ENCODE measurements at regions of chr2 and their contacts with region 1.

Region 1: DNA sequence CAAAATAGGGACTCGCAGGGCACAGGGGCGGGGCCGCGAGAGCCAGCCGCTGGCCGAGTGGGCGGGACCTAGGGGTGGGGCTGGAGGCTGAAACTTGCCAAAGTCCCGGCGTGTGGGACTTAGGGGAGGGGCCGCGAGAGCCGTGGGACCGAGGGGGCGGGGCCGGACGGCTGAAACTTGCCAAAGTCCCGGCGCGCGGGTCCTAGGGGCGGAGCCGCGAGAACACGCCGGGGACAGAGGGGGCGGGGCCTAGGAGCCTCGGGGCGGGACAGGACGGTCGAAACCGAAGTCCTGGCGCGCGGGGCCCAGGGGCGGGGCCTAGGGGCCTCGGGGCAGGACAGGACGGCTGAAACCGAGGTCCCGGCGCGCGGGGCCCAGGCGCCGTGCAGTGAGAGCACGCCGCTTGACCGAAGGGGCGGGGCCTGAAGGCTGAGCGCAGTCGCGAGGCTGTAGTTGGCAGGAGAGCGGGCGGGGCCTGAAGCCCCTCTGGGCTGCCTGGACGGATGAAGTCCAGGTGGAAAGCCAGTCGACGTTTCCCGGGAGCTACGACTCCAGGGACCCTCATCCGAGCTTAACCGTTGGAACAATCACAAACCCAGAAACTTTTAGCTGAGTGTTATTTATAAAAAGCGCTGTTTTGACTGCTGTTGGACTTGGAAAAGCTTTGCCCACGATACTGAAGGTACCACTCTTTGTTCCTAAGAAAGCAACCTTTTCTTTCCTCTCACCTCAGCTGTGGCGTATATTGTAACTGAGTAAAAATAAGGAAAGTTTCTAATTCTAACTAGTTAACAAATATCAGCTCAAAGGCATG is 475 bp upstream of the BARD1 start:
- DNase-seq: peak; percentile 98 to 99
- ATAC-seq: peak; percentile 87 to 88
- H3K4me3 ChIP-seq: peak overlapping the region; percentile 84 to 96 (median 88)
- H3K27ac ChIP-seq: peak overlapping the region; percentile 92 to 96 (median 94)
- H3K4me1 ChIP-seq: peaks cover 19 to 34% of the 10 kb centered on the region in 2 donors
- H3K27me3 ChIP-seq: no peaks in the 10 kb centered on the region
- CTCF ChIP-seq: no peak
- POLR2A ChIP-seq: no peak

Region 2: DNA sequence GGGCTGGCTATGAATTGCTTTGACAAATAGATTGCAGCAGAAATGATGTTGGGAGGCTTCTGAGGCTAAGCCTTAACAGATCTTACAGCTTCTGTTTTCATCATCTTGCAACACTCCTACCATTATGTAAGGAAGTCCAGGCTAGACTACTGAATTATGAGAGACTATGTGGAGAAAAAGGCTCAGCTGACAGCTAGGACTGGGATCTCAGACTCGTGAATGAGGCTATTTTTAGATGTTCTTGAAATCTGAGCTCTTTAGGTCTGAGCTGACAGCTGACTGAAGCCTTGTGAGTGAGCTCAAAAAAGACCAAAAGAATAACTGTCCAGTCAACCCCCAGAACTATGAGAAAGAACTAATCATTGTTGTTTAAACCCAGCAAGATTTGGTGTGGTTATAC is 328.8 kb before region 1 on chr2:
- in situ Hi-C with region 1: no loop called
- intact Hi-C with region 1: loop called (anchors 2 kb)
- DNase-seq: peak; percentile 42 to 62
- ATAC-seq: peak; percentile 97
- H3K4me3 ChIP-seq: no peak overlapping the region
- H3K27ac ChIP-seq: peak overlapping the region; percentile 78 to 87 (median 84)
- H3K4me1 ChIP-seq: peaks cover 10 to 46% of the 10 kb centered on the region in 2 donors
- H3K27me3 ChIP-seq: no peaks in the 10 kb centered on the region
- CTCF ChIP-seq: no peak
- POLR2A ChIP-seq: peak in 1 of 2 donors; percentile 42

Region 3: GRCh38 chr2:214604861-214605260 is 205.1 kb before region 1 on chr2:
- in situ Hi-C with region 1: no loop called
- intact Hi-C with region 1: no loop called
- DNase-seq: no peak
- ATAC-seq: no peak
- H3K4me3 ChIP-seq: no peak overlapping the region
- H3K27ac ChIP-seq: no peak overlapping the region
- H3K4me1 ChIP-seq: no peaks in the 10 kb centered on the region
- H3K27me3 ChIP-seq: no peaks in the 10 kb centered on the region
- CTCF ChIP-seq: no peak
- POLR2A ChIP-seq: no peak

Region 4: GRCh38 chr2:214742119-214742518 is 67.8 kb before region 1 on chr2:
- in situ Hi-C with region 1: no loop called
- intact Hi-C with region 1: loop called (anchors 2 kb)
- DNase-seq: no peak
- ATAC-seq: no peak
- H3K4me3 ChIP-seq: no peak overlapping the region
- H3K27ac ChIP-seq: no peak overlapping the region
- H3K4me1 ChIP-seq: no peaks in the 10 kb centered on the region
- H3K27me3 ChIP-seq: no peaks in the 10 kb centered on the region
- CTCF ChIP-seq: no peak
- POLR2A ChIP-seq: no peak

Region 5: DNA sequence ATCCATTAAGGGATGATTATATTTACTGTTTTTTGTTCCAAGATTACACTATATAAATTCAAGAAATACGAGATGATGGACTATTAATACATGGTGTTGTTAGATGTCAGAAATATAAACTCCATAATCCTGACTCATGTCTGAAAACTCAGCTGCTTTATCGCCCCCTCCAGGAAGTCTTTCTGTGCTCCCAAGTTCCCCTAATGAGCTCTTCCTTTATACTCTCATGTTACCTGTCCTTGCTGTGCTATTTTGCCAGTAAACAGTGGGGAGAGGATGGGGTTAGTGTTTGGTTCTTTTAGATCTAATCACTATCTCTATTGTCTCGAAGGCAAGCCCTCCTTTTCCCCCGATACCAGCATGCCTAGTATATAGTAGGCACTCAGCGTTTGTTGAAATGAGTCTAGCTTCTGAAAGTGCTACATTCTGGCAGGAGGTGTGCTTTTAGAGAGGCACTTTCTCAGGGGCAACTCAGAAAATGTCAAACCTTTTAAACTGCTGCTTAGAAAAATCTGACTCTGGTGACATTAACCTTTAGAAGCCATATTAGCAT is 20.9 kb after region 1 on chr2:
- in situ Hi-C with region 1: no loop called
- intact Hi-C with region 1: no loop called
- DNase-seq: no peak
- ATAC-seq: peak in 1 of 2 donors; percentile 36
- H3K4me3 ChIP-seq: no peak overlapping the region
- H3K27ac ChIP-seq: no peak overlapping the region
- H3K4me1 ChIP-seq: no peaks in the 10 kb centered on the region
- H3K27me3 ChIP-seq: no peaks in the 10 kb centered on the region
- CTCF ChIP-seq: peak in 1 of 5 experiments; percentile 37
- POLR2A ChIP-seq: no peak

Region 6: DNA sequence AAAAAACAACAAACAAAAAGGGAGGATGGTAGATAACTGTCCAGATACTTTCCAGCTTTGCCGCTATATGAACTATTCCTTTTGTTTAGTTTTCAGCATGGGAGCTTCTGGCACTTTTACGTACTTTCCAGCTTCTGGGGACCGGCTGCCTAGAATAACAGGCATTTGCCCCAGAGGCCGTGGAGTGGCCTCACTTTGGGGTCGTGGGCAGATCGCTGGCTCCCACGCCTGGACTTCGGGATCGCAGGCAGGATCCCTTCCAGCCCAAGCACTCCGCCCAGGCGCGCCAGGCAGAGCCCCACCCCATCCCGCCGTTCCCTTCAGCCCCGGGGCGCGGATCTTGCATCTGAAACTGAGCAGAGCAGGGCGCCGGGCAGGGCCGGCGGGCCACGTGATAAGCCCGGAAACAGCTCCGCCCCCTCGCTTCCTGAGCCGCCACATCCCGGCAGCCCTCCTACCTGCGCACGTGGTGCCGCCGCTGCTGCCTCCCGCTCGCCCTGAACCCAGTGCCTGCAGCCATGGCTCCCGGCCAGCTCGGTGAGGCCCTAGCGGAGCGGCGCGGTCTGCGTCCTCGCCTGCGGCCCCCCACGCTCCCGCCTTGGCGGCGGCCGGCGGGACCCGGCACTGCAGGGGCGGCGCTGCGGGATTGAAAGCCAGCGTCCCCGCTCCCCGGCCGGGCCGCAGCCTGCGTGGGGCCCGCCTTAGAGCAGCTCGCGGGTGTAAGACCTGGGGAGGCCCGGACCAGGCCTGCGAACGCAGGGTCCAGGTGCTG is 501.9 kb after region 1 on chr2 and contains the start of gene ATIC:
- in situ Hi-C with region 1: no loop called
- intact Hi-C with region 1: loop called (anchors 10 kb)
- DNase-seq: peak; percentile 90 to 91
- ATAC-seq: peak; percentile 94 to 97
- H3K4me3 ChIP-seq: peak within 1 kb of the TSS; percentile 59 to 81 (median 70)
- H3K27ac ChIP-seq: peak within 1 kb of the TSS; percentile 70 to 86 (median 82)
- H3K4me1 ChIP-seq: peaks cover 6 to 10% of the 10 kb centered on the region in 2 donors
- H3K27me3 ChIP-seq: no peaks in the 10 kb centered on the region
- CTCF ChIP-seq: peak in 3 of 5 experiments; percentile 14 to 37 (median 17)
- POLR2A ChIP-seq: peak; percentile 37 to 39
- total RNA-seq, gene ATIC: 16.9 to 46.9 (median 41.8) TPM

Region 7: GRCh38 chr2:215435809-215436704 is 626.1 kb after region 1 on chr2 and contains the start of gene FN1:
- in situ Hi-C with region 1: no loop called
- intact Hi-C with region 1: loop called (anchors 10 kb)
- DNase-seq: peak; percentile 75 to 79
- ATAC-seq: peak; percentile 79 to 84
- H3K4me3 ChIP-seq: peak within 1 kb of the TSS; percentile 63 to 69 (median 64)
- H3K27ac ChIP-seq: peak within 1 kb of the TSS; percentile 73 to 89 (median 79)
- H3K4me1 ChIP-seq: peaks cover 5 to 10% of the 10 kb centered on the region in 2 donors
- H3K27me3 ChIP-seq: peaks cover 10 to 42% (median 17%) of the 10 kb centered on the region in 3 donors
- CTCF ChIP-seq: no peak
- POLR2A ChIP-seq: peak; percentile 26 to 47
- total RNA-seq, gene FN1: 24.8 to 341 (median 58.6) TPM

Measured in gastrocnemius medialis (tissue), 4 donors.